HepG2 (cell line): ENCODE measurements at regions of chr4 and their contacts with region 1.

Region 1: DNA sequence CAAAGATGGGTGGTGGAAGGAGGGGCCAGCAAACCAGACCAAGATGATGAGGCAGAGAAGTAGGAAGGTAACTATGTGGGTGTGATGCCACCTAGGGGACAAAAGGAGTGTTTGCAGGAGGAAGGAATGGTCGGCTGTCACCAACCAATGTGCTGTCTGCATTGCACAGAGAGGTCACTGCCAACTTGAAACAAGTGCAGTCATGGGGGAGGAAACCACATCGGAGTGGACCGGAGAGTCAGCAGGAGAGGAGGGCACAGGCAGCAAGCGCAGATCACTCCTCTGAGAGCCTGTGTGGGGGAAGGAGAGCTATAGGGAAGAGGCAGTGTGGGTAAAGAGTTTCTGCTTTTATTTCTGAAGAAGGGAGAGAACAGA is 38.5 kb upstream of the FGFBP2 start:
- DNase-seq: peak; percentile 43
- ATAC-seq: peak; percentile 98
- H3K4me3 ChIP-seq: no peak overlapping the region
- H3K27ac ChIP-seq: no peak overlapping the region
- H3K4me1 ChIP-seq: no peaks in the 10 kb centered on the region
- H3K27me3 ChIP-seq: no peaks in the 10 kb centered on the region
- CTCF ChIP-seq: peak; percentile 92
- EP300 ChIP-seq: no peak
- POLR2A ChIP-seq: no peak
- RAD21 ChIP-seq: peak; percentile 64

Region 2: DNA sequence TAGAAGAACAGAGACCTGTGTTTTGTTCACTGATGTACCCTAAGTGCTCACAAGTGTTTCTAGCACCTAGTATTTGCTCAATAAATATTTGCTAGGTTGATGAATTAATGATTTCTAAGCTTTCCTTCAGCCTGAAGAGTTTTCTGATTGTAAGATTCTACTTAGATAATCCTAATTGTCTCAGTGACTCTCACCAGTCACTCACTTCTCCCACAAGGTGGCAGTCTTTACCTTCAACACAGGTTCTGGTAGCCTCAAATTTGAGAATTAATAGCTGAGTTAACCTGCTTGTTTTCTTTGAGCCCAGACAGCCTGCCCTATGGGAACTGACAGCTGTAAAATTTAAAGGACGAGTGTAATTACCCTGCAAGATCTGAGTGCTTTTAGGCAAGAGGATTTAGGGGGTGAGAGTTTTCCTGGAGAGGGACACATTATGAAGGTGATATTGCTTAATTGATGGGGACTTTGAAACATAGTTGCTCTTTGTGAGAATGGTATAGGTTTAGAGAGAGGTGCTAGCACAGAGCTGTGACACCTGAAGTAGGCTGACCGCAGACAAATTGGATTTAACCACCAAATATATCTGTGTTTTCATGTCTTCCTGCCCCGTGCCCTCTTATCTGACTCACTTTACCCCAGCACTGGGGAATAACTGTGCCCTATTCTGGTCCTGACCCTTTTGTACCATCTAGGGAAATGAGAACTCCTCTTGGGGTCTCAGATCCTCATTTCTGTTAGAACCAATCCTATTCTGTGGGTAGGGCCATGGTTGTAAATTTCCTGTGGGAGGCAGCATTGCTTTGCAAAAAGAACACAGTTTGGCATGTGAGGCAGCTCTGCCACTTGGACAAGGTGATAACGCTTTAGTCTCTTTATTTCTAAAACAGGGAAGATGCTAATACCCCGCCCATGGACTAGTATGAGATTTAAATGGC is 195.6 kb before region 1 on chr4:
- CTCF ChIA-PET with region 1: interaction called, 13 read pairs
- POLR2A ChIA-PET with region 1: no interaction called
- in situ Hi-C with region 1: no loop called
- intact Hi-C with region 1: loop called (anchors 1 kb)
- DNase-seq: peak; percentile 53
- ATAC-seq: peak; percentile 81
- H3K4me3 ChIP-seq: no peak overlapping the region
- H3K27ac ChIP-seq: no peak overlapping the region
- H3K4me1 ChIP-seq: no peaks in the 10 kb centered on the region
- H3K27me3 ChIP-seq: peaks cover 2 to 8% of the 10 kb centered on the region in 2 experiments; a peak in 2 of 5 replicates
- CTCF ChIP-seq: peak; percentile 76
- EP300 ChIP-seq: no peak
- POLR2A ChIP-seq: no peak
- RAD21 ChIP-seq: 0 out of 2 replicates have a peak, but pooled peaks have one; percentile 24

Region 3: GRCh38 chr4:15882675-15883086 is 118.8 kb before region 1 on chr4:
- CTCF ChIA-PET with region 1: interaction called, 5 read pairs
- POLR2A ChIA-PET with region 1: no interaction called
- in situ Hi-C with region 1: no loop called
- intact Hi-C with region 1: loop called (anchors 1 kb)
- DNase-seq: peak; percentile 64
- ATAC-seq: peak; percentile 96
- H3K4me3 ChIP-seq: no peak overlapping the region
- H3K27ac ChIP-seq: no peak overlapping the region
- H3K4me1 ChIP-seq: no peaks in the 10 kb centered on the region
- H3K27me3 ChIP-seq: no peaks in the 10 kb centered on the region; a peak in 1 of 5 replicates
- CTCF ChIP-seq: peak; percentile 89
- EP300 ChIP-seq: no peak
- POLR2A ChIP-seq: no peak
- RAD21 ChIP-seq: peak; percentile 54

Region 4: GRCh38 chr4:15963001-15963451 is 38.4 kb before region 1 on chr4 and contains the start of gene FGFBP2:
- CTCF ChIA-PET with region 1: interaction called, 8 read pairs
- POLR2A ChIA-PET with region 1: no interaction called
- in situ Hi-C with region 1: loop called (anchors 5 kb)
- intact Hi-C with region 1: loop called (anchors 1 kb)
- DNase-seq: peak; percentile 33
- ATAC-seq: peak; percentile 95
- H3K4me3 ChIP-seq: peak within 1 kb of the TSS in 1 of 3 experiments; percentile 13; a peak in 1 of 6 replicates
- H3K27ac ChIP-seq: no peak within 1 kb of the TSS
- H3K4me1 ChIP-seq: peaks cover 6% of the 10 kb centered on the region; the same call in 1 of the 2 replicates
- H3K27me3 ChIP-seq: peaks cover 0 to 18% of the 10 kb centered on the region in 2 experiments; a peak in 2 of 5 replicates
- CTCF ChIP-seq: peak; percentile 74
- EP300 ChIP-seq: no peak
- POLR2A ChIP-seq: no peak
- RAD21 ChIP-seq: peak; percentile 37; the same call in 1 of the 2 replicates
- total RNA-seq, gene FGFBP2: not detected in 2 replicates